ENCODE measurements at regions of chr6 and their contacts with region 1.

Region 1: GRCh38 chr6:42745707-42746462 is at the start of gene TBCC:
- H3K4me3 Mint-ChIP-seq: peak within 1 kb of the TSS; percentile 98
- H3K27ac Mint-ChIP-seq: peak within 1 kb of the TSS; percentile 92
- H3K4me1 Mint-ChIP-seq: peaks cover 23% of the 10 kb centered on the region
- H3K27me3 Mint-ChIP-seq: no peaks in the 10 kb centered on the region

Region 2: GRCh38 chr6:42710316-42710715 is 35.6 kb before region 1 on chr6:
- intact Hi-C with region 1: no loop called
- H3K4me3 Mint-ChIP-seq: no peak overlapping the region
- H3K27ac Mint-ChIP-seq: no peak overlapping the region
- H3K4me1 Mint-ChIP-seq: no peaks in the 10 kb centered on the region
- H3K27me3 Mint-ChIP-seq: peaks cover 3% of the 10 kb centered on the region

Region 3: DNA sequence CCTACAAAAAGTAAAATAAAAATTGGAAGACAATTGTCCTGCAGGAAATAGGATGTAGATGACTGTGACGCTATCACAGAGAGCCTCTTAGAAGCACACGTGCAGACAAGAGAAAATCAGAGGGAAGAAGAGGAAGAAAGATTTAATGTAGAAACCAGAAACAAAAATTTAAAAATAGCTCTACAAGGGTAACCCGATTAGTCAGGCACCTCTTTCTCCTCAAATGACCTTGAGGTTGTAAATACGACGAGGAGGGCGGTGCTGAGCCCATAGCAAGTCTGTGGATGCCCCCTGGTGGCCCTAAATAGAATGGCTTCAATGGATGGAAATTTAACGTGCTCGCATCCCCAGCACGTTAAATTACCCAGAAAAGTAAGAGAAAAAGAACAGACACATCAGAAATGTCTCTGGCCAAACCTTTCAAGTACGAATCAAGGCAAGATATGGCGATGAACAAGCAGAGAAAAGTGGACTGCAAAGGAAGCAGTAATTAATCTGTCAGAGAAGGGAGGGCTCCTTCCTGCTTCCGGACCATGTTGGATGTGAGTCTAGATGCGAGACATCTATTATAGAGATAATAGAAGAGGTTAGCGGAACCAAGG is 19.3 kb before region 1 on chr6:
- intact Hi-C with region 1: loop called (anchors 2 kb)
- H3K4me3 Mint-ChIP-seq: peak overlapping the region; percentile 86
- H3K27ac Mint-ChIP-seq: peak overlapping the region; percentile 90
- H3K4me1 Mint-ChIP-seq: peaks cover 19% of the 10 kb centered on the region
- H3K27me3 Mint-ChIP-seq: peaks cover 10% of the 10 kb centered on the region

Region 4: DNA sequence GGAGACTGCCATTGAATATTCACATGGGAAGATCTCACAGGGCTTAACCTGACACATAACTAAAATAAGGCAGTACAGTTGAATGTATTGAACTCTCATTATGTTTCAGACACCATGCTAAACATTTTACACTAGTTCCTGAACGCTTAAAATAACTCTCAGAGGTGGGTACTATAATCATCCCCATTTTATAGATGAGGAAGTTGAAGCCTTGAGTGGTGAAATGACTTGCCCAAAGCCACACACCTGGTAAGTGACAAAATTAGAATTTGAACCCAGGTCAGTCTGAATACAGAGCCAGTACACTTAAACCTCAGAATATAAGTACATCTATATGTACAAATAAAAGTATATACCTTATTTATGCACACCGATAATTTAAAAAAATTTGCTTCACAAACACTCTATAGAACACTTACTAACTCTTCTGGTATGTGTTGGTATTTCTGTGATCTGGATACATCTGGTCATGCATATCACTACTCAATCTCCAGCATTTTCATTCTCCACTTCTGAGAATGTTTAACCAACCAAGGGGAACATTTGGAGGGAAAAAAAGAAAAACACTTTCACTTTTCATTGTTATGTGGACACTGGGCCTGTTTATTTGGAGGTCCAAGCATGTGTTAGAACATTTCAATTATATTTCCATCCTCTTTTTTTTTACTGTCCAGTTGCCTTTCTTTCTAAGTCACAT is 31.4 kb after region 1 on chr6:
- intact Hi-C with region 1: loop called (anchors 1 kb)
- H3K4me3 Mint-ChIP-seq: no peak overlapping the region
- H3K27ac Mint-ChIP-seq: no peak overlapping the region
- H3K4me1 Mint-ChIP-seq: peaks cover 26% of the 10 kb centered on the region
- H3K27me3 Mint-ChIP-seq: no peaks in the 10 kb centered on the region

Region 5: GRCh38 chr6:42782622-42783176 is 36.8 kb after region 1 on chr6:
- intact Hi-C with region 1: loop called (anchors 1 kb)
- H3K4me3 Mint-ChIP-seq: peak overlapping the region; percentile 89
- H3K27ac Mint-ChIP-seq: no peak overlapping the region
- H3K4me1 Mint-ChIP-seq: peaks cover 7% of the 10 kb centered on the region
- H3K27me3 Mint-ChIP-seq: no peaks in the 10 kb centered on the region

Region 6: DNA sequence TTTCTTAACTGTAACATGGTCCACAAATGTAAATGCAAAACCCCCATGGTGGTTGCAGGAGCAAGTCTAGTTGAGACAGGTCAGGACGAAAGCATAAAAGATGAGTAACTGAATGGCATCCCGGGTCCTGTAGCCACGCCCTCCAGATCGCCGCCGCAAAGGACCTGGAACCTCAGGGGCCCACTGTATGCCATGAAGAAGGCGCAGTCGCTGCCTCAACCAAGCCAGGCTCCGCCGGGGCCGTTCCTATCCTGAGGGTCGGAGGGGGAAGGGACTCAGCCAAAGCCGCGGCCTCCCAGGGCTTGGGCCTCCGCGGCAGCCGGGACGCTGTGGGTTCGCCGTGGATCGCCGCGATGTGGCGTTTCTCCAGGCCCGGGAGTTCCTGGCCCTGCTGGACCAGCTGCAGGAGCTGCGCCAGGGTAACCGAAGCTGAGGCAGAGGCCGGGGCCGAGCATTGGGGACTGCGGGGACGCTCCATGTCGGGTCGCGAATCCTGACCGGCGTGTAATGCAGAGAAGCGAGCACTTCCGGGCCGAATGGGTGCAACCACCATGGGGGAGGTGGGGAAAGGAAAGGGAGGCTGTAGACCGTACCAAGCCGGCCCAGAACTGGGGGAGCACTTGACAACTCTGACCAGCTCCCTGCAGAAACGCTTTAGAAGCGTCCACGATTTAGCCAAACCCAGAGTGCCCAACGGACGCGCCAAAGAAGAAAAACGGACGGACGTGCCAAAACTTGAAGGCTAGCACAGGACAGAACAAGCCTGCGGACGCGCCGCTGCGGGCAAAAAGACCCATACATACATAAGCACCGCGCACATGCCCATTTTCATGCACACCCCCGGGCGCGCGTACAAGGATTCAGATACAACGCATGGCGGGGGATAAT is 144.7 kb after region 1 on chr6:
- intact Hi-C with region 1: loop called (anchors 1 kb)
- H3K4me3 Mint-ChIP-seq: peak overlapping the region; percentile 85
- H3K27ac Mint-ChIP-seq: peak overlapping the region; percentile 92
- H3K4me1 Mint-ChIP-seq: peaks cover 22% of the 10 kb centered on the region
- H3K27me3 Mint-ChIP-seq: no peaks in the 10 kb centered on the region

Region 7: DNA sequence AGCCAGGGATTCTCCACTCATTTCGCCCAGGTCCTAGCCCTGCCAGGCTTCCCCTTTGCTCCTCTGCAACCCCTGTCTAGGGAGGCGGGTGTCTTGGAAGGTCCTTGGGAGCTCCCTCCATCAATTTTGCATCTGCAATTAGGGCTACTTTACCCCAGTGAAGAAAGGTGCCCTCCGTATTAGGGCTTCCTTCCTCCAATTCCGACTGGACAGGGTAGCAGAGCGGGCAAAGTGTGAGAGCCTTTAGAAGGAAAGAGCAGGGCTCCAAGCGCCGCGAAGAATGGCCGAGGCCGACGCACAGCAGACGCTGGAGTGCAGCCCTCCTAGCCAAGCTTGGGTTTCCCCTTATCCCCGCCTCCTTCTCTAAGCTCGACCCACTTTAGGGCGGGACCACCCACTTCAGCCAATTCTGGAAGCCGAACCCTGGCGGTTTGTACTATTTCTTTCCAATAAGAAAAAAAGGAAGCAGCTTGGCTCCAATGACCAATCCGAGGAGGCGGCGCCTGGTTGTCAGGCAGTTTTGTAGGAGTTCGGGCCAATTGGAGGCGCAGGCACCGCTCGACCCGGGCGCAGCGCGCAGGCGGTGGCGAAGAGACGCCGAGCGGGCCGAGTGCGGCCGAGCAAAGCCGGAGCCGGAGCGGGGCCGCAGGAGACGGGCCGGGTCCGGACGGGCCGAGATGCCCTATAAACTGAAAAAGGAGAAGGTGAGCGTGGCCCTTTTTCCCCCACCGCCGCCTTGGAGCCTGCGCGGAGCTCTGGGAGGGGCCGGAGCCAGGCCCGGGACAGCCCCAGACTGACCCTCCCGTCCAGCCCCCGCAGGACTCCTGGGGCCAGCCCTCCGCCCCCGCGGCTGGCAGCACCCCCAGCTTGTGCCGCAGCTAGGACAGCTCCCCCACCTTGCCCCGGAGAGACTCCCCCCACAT is 238.4 kb after region 1 on chr6 and contains the start of gene PPP2R5D:
- intact Hi-C with region 1: no loop called
- H3K4me3 Mint-ChIP-seq: peak within 1 kb of the TSS; percentile 80
- H3K27ac Mint-ChIP-seq: peak within 1 kb of the TSS; percentile 80
- H3K4me1 Mint-ChIP-seq: peaks cover 70% of the 10 kb centered on the region
- H3K27me3 Mint-ChIP-seq: no peaks in the 10 kb centered on the region

Measured in dendritic cell treated with granulocyte-macrophage colony-stimulating factor and Interleukin-4, amounts not matched to agents 40 ng/mL and 50 ng/mL, for 4 days (primary cell).